Left cardiac atrium (tissue), 4 donors: ENCODE measurements at regions of chr7 and their contacts with region 1.

Region 1: DNA sequence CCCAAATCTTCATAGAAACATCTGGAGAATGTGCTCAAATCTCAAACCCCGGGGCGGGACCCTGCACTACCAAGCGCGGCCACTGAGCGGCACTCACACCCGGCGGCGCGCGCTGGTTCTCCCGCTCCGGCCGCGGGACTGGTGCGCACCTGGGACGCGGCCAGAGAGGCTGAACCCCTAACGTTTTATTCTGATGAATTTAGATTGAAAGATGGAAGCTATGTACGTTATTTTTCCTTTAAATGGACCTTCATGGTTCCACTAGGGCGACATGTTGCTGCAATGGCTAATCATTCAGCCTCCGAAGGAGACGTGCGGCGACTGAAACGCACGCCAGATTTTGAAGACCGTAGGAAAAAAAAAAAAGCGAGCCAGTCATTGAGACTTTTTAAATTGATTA is 107.0 kb upstream of the INSIG1 start:
- DNase-seq: peak; percentile 49
- ATAC-seq: peak; percentile 75 to 76

Region 2: GRCh38 chr7:155344600-155345433 is 154.1 kb after region 1 on chr7:
- intact Hi-C with region 1: loop called (anchors 1 to 5 kb)
- DNase-seq: peak; percentile 79
- ATAC-seq: peak; percentile 99

Region 3: DNA sequence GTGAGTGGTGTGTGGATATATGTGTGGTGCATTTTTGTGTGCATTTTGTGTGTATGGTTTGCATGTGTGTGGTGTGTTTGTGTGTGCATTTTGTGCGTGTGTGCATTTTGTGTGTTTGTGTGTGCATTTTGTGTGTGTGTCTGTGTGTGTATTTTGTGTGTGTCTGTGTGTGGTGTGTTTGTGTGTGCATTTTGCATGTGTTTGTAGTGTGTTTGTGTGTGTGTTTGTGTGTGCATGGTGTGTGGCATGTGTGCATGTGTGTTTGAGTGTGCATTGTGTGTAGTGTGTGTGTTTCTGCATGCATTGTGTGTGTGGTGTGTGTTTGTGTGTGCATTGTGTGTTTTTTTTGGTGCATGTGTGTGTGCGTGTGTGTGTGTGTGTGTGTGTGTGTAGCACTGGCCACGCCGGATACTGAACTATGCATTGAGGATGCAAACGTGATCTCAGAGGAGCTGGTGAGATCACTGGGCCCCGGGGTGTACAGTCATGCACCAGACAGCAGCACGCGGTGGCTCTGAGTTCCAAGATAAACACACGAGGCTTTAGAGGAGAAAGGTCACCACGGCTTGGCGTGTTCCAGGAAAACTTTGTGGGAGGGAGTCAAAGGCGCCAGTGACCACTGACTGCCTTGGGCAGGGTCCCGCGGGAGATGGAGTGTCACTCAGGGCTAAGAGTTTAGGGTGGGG is 728.2 kb after region 1 on chr7:
- intact Hi-C with region 1: no loop called
- DNase-seq: peak; percentile 47
- ATAC-seq: peak; percentile 76 to 86